ENCODE measurements at regions of chr9 and their contacts with region 1.

Region 1: DNA sequence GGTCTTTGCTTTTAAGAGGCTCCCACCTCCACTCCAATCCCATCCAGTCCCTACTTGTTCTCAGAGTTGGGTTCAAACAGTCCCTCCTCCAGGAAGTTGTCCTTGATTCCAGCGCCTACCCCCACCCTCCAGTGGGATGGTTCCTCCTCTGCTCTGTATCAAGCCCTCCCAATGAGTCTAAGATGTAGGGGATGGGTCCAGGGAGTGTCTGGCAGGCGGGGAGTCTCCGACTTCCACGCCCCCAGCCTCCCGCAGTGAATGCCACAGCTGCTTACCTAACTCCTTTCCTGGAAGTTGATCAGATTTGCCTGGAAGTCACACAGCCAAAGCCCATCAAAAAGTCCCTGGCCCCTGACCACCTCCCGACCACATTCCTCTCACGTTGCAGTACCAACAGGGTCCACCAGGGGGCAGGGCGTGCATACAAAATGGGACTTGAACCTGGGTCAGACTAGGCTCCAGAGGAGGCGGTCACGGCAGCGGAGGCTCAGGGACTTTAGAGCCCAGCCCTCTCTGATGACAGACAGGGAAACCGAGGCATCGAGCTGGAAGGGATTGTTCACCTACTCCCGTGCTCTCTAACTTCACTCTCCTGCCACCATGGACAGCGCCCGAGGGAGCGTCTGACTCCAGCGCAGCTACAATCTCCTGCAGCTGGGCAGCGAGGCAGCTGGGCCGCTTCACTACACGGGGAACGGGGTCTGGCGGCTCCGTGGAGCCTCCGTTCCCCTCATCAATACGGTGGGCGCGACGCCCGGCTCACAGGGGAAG is 25.0 kb upstream of the TDRD7 start:
- DNase-seq: peak; percentile 43 to 66 (median 57)
- H3K4me3 ChIP-seq: no peak overlapping the region
- H3K4me3 Mint-ChIP-seq: peak overlapping the region in 2 of 8 donors; percentile 22 to 46
- H3K27ac ChIP-seq: no peak overlapping the region
- H3K27ac Mint-ChIP-seq: peak overlapping the region in 1 of 7 donors; percentile 72
- H3K4me1 ChIP-seq: peaks cover 7% of the 10 kb centered on the region
- H3K4me1 Mint-ChIP-seq: peaks cover 2 to 14% (median 9%) of the 10 kb centered on the region in 4 donors
- H3K27me3 ChIP-seq: no peaks in the 10 kb centered on the region
- H3K27me3 Mint-ChIP-seq: peaks cover 2 to 7% of the 10 kb centered on the region in 2 donors

Region 2: GRCh38 chr9:97376902-97377301 is 10.0 kb before region 1 on chr9:
- CTCF ChIA-PET with region 1: interaction called, 12 read pairs
- POLR2A ChIA-PET with region 1: no interaction called
- intact Hi-C with region 1: no loop called
- DNase-seq: no peak
- H3K4me3 ChIP-seq: no peak overlapping the region
- H3K4me3 Mint-ChIP-seq: no peak overlapping the region
- H3K27ac ChIP-seq: no peak overlapping the region
- H3K27ac Mint-ChIP-seq: no peak overlapping the region
- H3K4me1 ChIP-seq: no peaks in the 10 kb centered on the region
- H3K4me1 Mint-ChIP-seq: no peaks in the 10 kb centered on the region
- H3K27me3 ChIP-seq: no peaks in the 10 kb centered on the region
- H3K27me3 Mint-ChIP-seq: no peaks in the 10 kb centered on the region

Region 3: DNA sequence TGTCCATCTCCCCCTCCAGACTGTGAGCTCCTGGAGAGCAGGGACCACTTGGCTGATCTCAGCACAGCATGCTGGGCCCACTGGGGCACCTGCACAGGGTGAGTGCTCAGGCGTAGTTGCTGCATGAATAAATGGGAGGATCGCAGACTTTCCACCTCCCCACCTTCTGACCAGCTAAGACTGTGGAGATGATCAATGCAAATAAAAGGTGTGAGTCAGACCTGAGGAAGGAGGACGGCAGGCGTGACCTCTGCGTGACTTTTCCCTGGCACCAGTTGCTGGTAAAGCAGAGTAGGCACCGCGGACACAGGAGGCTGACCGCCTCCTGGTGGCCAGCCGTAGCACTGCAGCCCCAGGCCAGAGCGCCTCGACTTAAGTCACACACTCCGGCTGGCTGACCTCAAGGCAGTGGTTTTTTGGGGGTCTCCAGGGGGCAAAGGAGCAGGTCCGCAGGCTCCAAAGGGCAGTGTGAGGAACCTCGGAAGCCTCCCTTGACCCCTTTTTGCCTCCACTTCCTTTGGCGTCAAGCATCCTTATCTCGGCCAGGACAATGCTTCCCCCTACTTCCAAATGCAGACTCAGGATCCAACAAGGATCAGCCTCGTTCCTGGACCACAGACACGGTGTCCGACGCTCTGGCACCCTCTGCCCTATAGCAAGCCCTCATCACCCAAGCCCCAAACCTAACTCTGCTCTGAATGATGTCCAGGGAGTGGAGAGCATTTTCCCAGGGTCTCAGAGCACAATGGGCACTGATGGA is 12.3 kb after region 1 on chr9:
- CTCF ChIA-PET with region 1: interaction called, 11 read pairs
- POLR2A ChIA-PET with region 1: no interaction called
- intact Hi-C with region 1: no loop called
- DNase-seq: peak; percentile 53 to 63 (median 55)
- H3K4me3 ChIP-seq: no peak overlapping the region
- H3K4me3 Mint-ChIP-seq: no peak overlapping the region
- H3K27ac ChIP-seq: no peak overlapping the region
- H3K27ac Mint-ChIP-seq: no peak overlapping the region
- H3K4me1 ChIP-seq: no peaks in the 10 kb centered on the region
- H3K4me1 Mint-ChIP-seq: peaks cover 0 to 2% (median 1%) of the 10 kb centered on the region in 4 donors
- H3K27me3 ChIP-seq: no peaks in the 10 kb centered on the region
- H3K27me3 Mint-ChIP-seq: peaks cover 0 to 2% of the 10 kb centered on the region in 2 donors

Region 4: DNA sequence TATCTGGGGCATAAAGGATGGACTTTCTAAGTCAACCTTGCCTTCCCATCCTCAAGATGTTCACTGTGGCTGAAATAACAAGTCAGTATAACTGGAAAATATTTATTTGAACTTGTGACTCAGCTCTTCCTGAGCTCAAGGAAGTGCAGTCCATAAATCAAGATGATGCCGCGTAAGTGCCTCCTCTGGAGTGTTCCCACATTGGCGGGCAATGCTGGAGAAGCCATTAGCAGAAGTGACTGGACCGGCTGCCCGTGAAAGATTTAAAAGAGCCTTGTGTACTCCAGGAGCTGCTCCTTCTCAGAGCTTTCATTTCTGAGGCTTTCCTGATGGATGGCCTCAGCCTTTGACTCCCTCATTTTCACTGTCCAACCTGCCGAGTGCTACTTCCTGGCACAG is 132.0 kb after region 1 on chr9:
- CTCF ChIA-PET with region 1: no interaction called
- POLR2A ChIA-PET with region 1: no interaction called
- intact Hi-C with region 1: no loop called
- DNase-seq: no peak
- H3K4me3 ChIP-seq: no peak overlapping the region
- H3K4me3 Mint-ChIP-seq: no peak overlapping the region
- H3K27ac ChIP-seq: no peak overlapping the region
- H3K27ac Mint-ChIP-seq: peak overlapping the region in 1 of 7 donors; percentile 30
- H3K4me1 ChIP-seq: no peaks in the 10 kb centered on the region
- H3K4me1 Mint-ChIP-seq: peaks cover 0 to 6% (median 0%) of the 10 kb centered on the region in 4 donors
- H3K27me3 ChIP-seq: no peaks in the 10 kb centered on the region
- H3K27me3 Mint-ChIP-seq: peaks cover 19 to 24% of the 10 kb centered on the region in 2 donors

Measured in CD4-positive, alpha-beta memory T cell (primary cell).